ENCODE measurements at regions of chr6 and their contacts with region 1.

Region 1: DNA sequence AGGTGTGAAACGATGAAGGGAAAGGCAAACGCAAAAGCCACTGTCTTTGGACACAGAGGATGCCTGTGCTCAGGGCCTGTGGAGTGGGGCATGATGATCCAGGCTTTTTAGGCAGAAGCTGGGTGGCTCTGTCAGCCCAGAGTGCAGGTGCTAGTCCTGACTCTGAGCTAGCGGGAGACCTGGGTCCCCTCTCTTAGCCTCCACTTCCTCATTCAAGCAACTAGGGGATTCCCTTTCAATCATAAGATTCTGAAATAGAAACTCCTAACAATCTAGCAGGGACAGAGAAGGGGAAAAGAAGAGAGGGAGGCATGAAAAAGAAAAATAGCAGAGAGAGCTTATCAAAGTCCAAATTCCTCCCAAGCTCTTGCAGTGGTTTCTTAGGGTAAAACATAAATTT is 7.6 kb upstream of the HIVEP2 start:
- DNase-seq: no peak
- H3K4me3 ChIP-seq: no peak overlapping the region
- H3K27ac ChIP-seq: no peak overlapping the region
- H3K4me1 ChIP-seq: peaks cover 0 to 6% of the 10 kb centered on the region in 2 donors
- H3K27me3 ChIP-seq: no peaks in the 10 kb centered on the region
- CTCF ChIP-seq: no peak
- POLR2A ChIP-seq: no peak

Region 2: GRCh38 chr6:142845624-142846458 is 106.8 kb before region 1 on chr6:
- intact Hi-C with region 1: no loop called
- DNase-seq: peak; percentile 89 to 96 (median 92)
- H3K4me3 ChIP-seq: peak overlapping the region in 1 of 4 donors; percentile 40
- H3K27ac ChIP-seq: peak overlapping the region; percentile 66 to 86 (median 77)
- H3K4me1 ChIP-seq: peaks cover 14 to 77% of the 10 kb centered on the region in 2 donors
- H3K27me3 ChIP-seq: no peaks in the 10 kb centered on the region
- CTCF ChIP-seq: peak in 3 of 6 experiments; percentile 8 to 33 (median 13)
- POLR2A ChIP-seq: peak in 1 of 2 donors; percentile 74

Region 3: DNA sequence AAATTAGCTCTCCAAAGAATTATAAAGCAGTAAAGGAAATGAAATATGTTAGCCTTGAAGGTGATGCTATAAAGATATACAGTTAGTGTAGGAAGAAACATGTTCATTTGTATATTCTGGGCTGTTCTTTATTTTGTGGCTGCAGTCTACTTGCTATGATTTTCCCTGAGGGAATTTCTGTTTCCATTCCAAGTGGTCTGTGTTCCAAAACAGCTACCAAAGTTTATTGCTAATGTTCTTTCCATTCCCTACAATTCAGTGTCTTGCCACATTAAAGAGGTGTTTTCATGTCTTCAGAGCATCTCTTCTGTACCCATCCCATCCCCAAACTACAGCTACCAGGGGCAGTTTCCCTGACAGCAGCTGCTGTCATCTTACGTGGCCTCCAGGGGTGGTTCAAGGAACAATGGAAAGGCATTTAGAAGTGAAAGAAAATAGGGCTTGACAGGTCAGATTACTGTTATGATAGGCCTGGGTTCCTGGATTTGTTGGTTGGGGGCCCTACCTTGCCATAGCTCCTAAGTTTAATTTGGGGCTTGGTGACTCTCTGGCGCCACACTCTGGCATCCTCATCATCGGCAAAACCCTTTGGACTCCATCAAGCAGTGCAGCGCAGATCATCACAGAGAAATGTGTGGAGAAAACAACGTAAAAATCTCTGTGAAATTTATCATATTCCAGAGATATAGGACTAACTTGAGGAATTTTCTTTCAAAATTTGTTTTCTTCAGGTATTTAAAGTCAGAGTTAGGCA is 74.3 kb after region 1 on chr6:
- intact Hi-C with region 1: loop called in 1 of 2 experiments (anchors 10 kb)
- DNase-seq: peak; percentile 29 to 75 (median 53)
- H3K4me3 ChIP-seq: no peak overlapping the region
- H3K27ac ChIP-seq: no peak overlapping the region
- H3K4me1 ChIP-seq: no peaks in the 10 kb centered on the region
- H3K27me3 ChIP-seq: no peaks in the 10 kb centered on the region
- CTCF ChIP-seq: peak; percentile 46 to 75 (median 67)
- POLR2A ChIP-seq: no peak